Sciatic nerve (tissue), 2 donors: ENCODE measurements at regions of chr5 and their contacts with region 1.

Region 1: DNA sequence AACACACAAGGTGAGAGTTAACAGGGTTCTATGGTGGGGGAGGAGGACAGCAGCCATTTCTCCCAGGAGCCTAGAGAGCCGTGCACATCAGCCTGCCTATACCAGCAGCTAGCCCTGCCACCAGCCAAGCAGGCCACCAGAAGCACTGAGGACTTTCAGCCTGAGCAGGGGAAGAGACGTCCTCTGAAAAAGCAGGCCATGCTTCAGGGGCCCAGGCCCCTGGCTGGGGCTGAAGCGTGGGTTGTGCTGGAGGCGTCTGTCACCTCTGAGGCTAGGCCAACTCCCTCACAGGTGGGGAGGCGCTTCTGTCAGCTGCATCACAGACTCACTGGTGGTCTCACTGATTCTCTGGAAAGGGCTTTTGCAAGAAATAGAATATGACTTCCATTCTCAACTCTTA is 16.3 kb downstream of the FSTL4 start:
- DNase-seq: no peak
- ATAC-seq: no peak

Region 2: GRCh38 chr5:133569347-133569746 is 26.7 kb before region 1 on chr5:
- intact Hi-C with region 1: loop called (anchors 1 kb)
- DNase-seq: no peak
- ATAC-seq: no peak